ENCODE measurements at regions of chr17 and their contacts with region 1.

Region 1: GRCh38 chr17:17706140-17707060 is 25.1 kb downstream of the RAI1 start:
- DNase-seq: no peak
- H3K4me3 ChIP-seq: no peak overlapping the region
- H3K27ac ChIP-seq: no peak overlapping the region
- H3K4me1 ChIP-seq: peaks cover 4 to 26% (median 16%) of the 10 kb centered on the region in 4 experiments
- H3K27me3 ChIP-seq: peaks cover 37 to 65% (median 59%) of the 10 kb centered on the region in 4 experiments
- CTCF ChIP-seq: peak; percentile 20 to 32 (median 26)
- EP300 ChIP-seq: no peak
- POLR2A ChIP-seq: no peak
- RAD21 ChIP-seq: no peak; a peak in 1 of 4 replicates

Region 2: GRCh38 chr17:17648762-17649161 is 57.6 kb before region 1 on chr17:
- CTCF ChIA-PET with region 1: no interaction called
- POLR2A ChIA-PET with region 1: no interaction called
- DNase-seq: no peak
- H3K4me3 ChIP-seq: no peak overlapping the region
- H3K27ac ChIP-seq: no peak overlapping the region
- H3K4me1 ChIP-seq: no peaks in the 10 kb centered on the region
- H3K27me3 ChIP-seq: no peaks in the 10 kb centered on the region; a peak in 1 of 7 replicates
- CTCF ChIP-seq: no peak
- EP300 ChIP-seq: no peak
- POLR2A ChIP-seq: no peak
- RAD21 ChIP-seq: no peak

Region 3: DNA sequence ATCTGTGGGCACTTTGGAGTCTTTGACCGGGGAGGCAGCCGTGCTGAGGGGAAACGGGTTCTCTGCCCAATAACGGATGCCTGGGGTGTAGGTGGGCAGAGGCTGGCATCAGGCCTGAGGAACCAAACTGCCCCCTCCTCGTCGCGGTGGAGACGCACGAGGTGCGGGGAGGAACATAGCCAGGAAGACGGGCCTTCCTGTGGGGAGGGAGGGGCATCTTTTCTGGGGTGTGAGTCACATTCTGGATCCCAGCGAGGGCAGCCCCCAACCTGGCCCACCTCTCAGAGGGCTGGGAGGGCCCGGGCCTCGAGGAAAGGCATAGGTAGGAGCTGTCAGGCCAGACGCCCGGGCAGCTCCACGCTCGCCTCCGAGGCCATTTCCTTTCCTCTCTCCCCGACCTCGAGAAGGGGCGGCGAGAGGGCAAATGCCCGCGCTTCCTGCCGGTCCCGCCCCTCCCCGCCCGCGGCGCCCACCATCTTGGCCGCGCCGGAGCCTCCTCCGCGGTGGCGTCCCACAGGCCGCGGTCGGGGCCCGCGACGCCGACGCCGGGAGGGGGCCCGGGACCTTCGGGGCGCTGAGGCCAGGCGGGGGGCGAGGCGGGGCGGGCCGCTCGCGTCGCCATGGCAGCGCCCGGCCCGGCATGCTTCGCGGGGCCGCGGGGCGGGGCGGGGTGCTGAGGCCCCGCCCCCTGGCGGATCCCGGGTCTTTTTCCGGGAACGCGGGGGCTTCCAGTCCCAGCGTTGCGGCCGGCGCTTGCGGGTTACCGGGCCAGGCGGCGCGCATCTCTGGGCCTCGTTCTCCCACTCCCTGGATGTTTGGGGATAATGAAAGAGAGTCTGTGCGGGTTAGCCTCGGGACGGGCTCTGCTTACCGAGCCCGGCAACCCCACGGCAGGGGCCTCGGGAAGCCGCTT is 12.0 kb before region 1 on chr17:
- CTCF ChIA-PET with region 1: interaction called, 23 read pairs
- POLR2A ChIA-PET with region 1: interaction called, 8 read pairs
- DNase-seq: peak in 1 of 2 experiments; percentile 84
- H3K4me3 ChIP-seq: peak overlapping the region; percentile 39 to 59 (median 53); a peak in 7 of 8 replicates
- H3K27ac ChIP-seq: peak overlapping the region; percentile 60
- H3K4me1 ChIP-seq: peaks cover 0 to 38% (median 36%) of the 10 kb centered on the region in 4 experiments; a peak in 6 of 7 replicates
- H3K27me3 ChIP-seq: peaks cover 32 to 79% (median 63%) of the 10 kb centered on the region in 4 experiments
- CTCF ChIP-seq: no peak
- EP300 ChIP-seq: no peak
- POLR2A ChIP-seq: no peak
- RAD21 ChIP-seq: no peak